ENCODE measurements at regions of chr1 and their contacts with region 1.

Region 1: DNA sequence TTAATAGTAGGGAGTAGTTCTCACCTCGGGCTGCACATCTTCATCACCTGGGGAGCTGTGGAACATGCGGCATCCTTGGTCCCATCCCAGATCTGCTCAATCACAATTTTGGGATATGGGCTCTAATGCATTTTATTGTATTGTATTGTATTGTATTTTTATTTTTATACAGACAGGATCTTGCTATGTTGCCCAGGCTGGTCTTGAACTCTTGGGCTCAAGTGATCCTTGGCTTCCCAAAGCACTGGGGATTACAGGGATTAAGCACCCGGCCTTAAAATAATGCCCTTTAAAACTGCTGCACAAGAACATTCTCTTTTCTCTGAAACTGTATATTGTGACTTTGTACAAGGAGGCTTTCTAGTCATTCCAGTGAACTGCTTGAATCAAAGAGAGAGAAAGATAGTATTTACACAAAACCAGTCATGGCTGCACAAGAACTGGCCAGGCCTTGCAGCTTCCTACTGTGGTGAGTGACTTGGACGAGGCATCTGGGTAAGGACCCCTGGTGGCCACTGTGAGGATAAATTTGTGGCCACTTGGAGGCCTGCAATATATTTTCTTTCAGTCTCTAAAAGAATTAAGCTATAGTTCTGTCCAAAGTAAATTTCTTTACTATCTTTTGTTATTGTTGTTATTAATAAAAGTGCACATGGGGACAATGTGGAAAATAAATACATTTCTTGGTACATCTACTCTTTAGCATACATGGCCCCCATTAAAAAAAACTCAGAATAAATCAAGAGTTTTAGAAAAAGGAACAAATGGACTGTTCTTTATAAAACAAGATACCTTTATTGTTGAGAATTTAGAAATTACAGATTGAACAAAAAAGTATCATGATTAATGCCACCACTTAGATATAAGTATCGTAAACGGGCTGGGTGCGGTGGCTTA is 48.0 kb downstream of the TBCE start:
- DNase-seq: peak; percentile 88
- H3K4me3 Mint-ChIP-seq: no peak overlapping the region
- H3K27ac Mint-ChIP-seq: no peak overlapping the region
- H3K4me1 Mint-ChIP-seq: peaks cover 18% of the 10 kb centered on the region
- H3K27me3 Mint-ChIP-seq: no peaks in the 10 kb centered on the region
- CTCF ChIP-seq: peak; percentile 86

Region 2: GRCh38 chr1:235160957-235161684 is 254.1 kb before region 1 on chr1 and contains the start of gene RBM34:
- CTCF ChIA-PET with region 1: interaction called, 4 read pairs
- POLR2A ChIA-PET with region 1: interaction called, 6 read pairs
- intact Hi-C with region 1: loop called (anchors 1 kb)
- DNase-seq: peak; percentile 97
- H3K4me3 Mint-ChIP-seq: peak within 1 kb of the TSS; percentile 84
- H3K27ac Mint-ChIP-seq: peak within 1 kb of the TSS; percentile 95
- H3K4me1 Mint-ChIP-seq: peaks cover 14% of the 10 kb centered on the region
- H3K27me3 Mint-ChIP-seq: no peaks in the 10 kb centered on the region
- CTCF ChIP-seq: no peak
- total RNA-seq, gene RBM34: 150 and 184 TPM in 2 replicates

Region 3: DNA sequence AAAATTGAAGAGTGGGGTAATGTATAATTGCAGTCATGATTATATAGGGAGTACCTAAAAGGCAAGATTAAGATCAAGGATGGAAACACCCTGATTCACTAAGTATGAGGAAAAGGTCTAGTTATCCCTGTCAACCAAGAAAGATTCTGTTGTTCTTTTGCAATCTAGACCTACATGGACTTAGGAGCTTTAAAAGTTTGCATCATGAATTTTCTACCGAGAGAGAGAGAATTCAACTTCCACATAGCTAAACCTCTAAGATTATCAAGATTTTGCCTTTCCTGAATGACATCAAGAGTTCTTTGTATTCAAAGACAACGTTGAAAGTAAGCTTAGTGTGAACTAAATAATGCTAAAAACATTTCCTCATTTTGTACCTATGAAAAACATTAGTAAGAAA is 175.4 kb before region 1 on chr1:
- CTCF ChIA-PET with region 1: interaction called, 52 read pairs
- POLR2A ChIA-PET with region 1: interaction called, 4 read pairs
- intact Hi-C with region 1: no loop called
- DNase-seq: no peak
- H3K4me3 Mint-ChIP-seq: no peak overlapping the region
- H3K27ac Mint-ChIP-seq: peak overlapping the region; percentile 5
- H3K4me1 Mint-ChIP-seq: peaks cover 7% of the 10 kb centered on the region
- H3K27me3 Mint-ChIP-seq: no peaks in the 10 kb centered on the region
- CTCF ChIP-seq: no peak

Region 4: GRCh38 chr1:235275223-235275622 is 140.0 kb before region 1 on chr1:
- CTCF ChIA-PET with region 1: interaction called, 18 read pairs
- POLR2A ChIA-PET with region 1: interaction called, 4 read pairs
- intact Hi-C with region 1: no loop called
- DNase-seq: no peak
- H3K4me3 Mint-ChIP-seq: no peak overlapping the region
- H3K27ac Mint-ChIP-seq: no peak overlapping the region
- H3K4me1 Mint-ChIP-seq: peaks cover 43% of the 10 kb centered on the region
- H3K27me3 Mint-ChIP-seq: no peaks in the 10 kb centered on the region
- CTCF ChIP-seq: no peak

Region 5: GRCh38 chr1:235391874-235392273 is 23.4 kb before region 1 on chr1:
- CTCF ChIA-PET with region 1: interaction called, 66 read pairs
- POLR2A ChIA-PET with region 1: interaction called, 3 read pairs
- intact Hi-C with region 1: no loop called
- DNase-seq: peak; percentile 22
- H3K4me3 Mint-ChIP-seq: no peak overlapping the region
- H3K27ac Mint-ChIP-seq: no peak overlapping the region
- H3K4me1 Mint-ChIP-seq: peaks cover 3% of the 10 kb centered on the region
- H3K27me3 Mint-ChIP-seq: no peaks in the 10 kb centered on the region
- CTCF ChIP-seq: no peak

Region 6: DNA sequence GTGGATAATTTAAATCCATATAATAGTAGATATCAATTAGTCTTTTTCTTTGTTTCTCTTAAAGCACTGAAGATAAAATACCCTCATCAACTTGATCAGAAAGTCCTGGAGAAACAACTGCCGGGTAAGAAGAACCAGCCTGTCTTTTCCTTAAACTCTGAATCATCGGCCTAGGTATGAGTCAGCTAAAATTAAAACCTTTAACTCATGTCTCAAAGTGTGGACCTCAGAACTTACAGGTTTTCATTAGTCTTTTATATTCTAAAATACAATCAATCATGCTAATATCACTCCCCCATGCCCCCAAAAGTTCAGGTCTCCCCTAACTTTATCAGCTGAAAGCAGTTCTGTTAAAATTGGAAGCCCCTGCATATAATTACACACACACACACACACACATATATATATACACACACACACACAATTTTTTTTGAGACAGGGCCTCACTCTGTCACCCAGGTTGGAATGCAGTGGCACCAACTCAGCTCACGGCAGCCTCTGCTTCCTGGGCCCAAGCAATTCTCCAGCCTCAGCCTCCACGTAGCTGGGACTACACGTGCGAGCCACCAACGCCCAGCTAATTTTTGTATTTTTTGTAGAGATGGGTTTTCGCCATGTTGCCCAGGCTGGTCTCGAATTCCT is 27.7 kb after region 1 on chr1:
- CTCF ChIA-PET with region 1: interaction called, 12 read pairs
- POLR2A ChIA-PET with region 1: interaction called, 3 read pairs
- intact Hi-C with region 1: no loop called
- DNase-seq: peak; percentile 80
- H3K4me3 Mint-ChIP-seq: no peak overlapping the region
- H3K27ac Mint-ChIP-seq: peak overlapping the region; percentile 74
- H3K4me1 Mint-ChIP-seq: peaks cover 19% of the 10 kb centered on the region
- H3K27me3 Mint-ChIP-seq: no peaks in the 10 kb centered on the region
- CTCF ChIP-seq: no peak